HEK293T (cell line): ENCODE measurements at regions of chr10 and their contacts with region 1.

Region 1: DNA sequence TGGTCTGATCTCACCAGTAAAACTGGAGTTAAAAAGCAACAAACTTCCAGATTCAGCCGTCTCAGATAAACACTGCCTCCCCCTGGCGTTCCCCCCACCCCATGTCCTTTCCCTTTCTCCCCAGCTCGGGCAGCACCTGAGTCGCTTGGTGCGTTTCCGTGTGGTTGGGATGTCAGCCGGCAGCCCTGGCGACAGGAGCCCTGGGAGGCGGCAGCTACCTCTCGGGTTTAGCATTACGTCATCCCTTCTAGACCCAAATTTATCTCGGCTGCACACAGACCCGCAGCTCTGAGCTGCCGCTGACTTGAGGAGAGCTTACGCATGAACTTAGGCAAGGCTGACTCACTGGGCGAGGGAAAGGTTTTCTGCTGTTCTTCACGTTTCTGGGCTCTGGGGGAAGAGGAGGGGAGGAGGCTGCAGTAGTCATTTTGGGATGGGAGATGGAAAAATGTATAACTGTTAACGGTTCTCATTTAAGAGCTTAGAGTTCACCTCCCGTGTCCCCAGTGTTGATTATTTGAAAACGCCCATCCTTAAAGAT is 14.4 kb downstream of the MXI1 start:
- DNase-seq: peak; percentile 78

Region 2: GRCh38 chr10:110210674-110211464 is 10.9 kb before region 1 on chr10:
- CTCF ChIA-PET with region 1: interaction called, 11 read pairs
- POLR2A ChIA-PET with region 1: interaction called, 83 read pairs
- DNase-seq: peak; percentile 99

Region 3: DNA sequence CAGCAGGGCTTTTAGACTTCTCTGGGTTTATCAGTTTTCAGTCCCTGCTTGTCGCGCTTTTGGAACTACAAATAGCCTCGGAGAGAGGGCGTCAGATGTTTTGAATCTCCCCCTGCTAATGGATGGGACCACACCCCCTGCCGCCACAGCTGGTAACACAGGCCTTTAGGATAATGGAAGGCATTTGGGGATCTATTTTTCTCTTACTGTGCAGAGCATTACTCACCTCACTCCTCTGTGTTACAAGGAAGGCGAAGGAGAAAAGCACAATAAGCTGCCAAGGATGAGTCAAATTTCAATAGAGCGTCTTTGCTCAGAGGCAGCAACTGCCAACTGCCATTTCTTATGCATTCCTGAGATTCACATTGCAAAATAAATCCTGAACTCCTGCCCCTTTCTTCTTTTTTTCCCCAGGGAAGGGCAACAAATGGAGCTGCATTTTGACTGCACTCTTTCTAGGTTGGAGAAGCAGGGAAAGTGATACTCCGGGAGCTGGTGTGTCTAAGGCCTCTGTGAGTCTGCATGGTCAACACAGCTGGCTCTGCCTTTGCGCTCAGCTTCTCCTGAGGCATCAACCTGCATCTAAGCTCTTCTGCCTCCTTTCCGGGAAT is 114.4 kb after region 1 on chr10:
- CTCF ChIA-PET with region 1: no interaction called
- POLR2A ChIA-PET with region 1: no interaction called
- DNase-seq: no peak